ENCODE measurements at regions of chr19 and their contacts with region 1.

Region 1: GRCh38 chr19:45469132-45469944 is 1.5 kb downstream of the FOSB start:
- DNase-seq: peak; percentile 78 to 94
- ATAC-seq: peak; percentile 58 to 63
- H3K4me3 ChIP-seq: peak overlapping the region; percentile 58
- H3K27ac ChIP-seq: peak overlapping the region; percentile 55 to 86
- H3K4me1 ChIP-seq: peaks cover 24% of the 10 kb centered on the region
- CTCF ChIP-seq: no peak
- EP300 ChIP-seq: no peak
- POLR2A ChIP-seq: peak; percentile 28; the same call in 1 of the 2 replicates
- RAD21 ChIP-seq: no peak

Region 2: GRCh38 chr19:45439569-45440254 is 29.6 kb before region 1 on chr19:
- CTCF ChIA-PET with region 1: interaction called, 1,883 read pairs
- POLR2A ChIA-PET with region 1: interaction called, 40 read pairs
- DNase-seq: peak; percentile 74 to 83
- ATAC-seq: peak; percentile 26 to 55
- H3K4me3 ChIP-seq: peak overlapping the region; percentile 52
- H3K27ac ChIP-seq: peak overlapping the region; percentile 80 to 95
- H3K4me1 ChIP-seq: peaks cover 27% of the 10 kb centered on the region
- CTCF ChIP-seq: peak; percentile 100
- EP300 ChIP-seq: no peak
- POLR2A ChIP-seq: peak; percentile 12; the same call in 1 of the 2 replicates
- RAD21 ChIP-seq: peak; percentile 77 to 99

Region 3: DNA sequence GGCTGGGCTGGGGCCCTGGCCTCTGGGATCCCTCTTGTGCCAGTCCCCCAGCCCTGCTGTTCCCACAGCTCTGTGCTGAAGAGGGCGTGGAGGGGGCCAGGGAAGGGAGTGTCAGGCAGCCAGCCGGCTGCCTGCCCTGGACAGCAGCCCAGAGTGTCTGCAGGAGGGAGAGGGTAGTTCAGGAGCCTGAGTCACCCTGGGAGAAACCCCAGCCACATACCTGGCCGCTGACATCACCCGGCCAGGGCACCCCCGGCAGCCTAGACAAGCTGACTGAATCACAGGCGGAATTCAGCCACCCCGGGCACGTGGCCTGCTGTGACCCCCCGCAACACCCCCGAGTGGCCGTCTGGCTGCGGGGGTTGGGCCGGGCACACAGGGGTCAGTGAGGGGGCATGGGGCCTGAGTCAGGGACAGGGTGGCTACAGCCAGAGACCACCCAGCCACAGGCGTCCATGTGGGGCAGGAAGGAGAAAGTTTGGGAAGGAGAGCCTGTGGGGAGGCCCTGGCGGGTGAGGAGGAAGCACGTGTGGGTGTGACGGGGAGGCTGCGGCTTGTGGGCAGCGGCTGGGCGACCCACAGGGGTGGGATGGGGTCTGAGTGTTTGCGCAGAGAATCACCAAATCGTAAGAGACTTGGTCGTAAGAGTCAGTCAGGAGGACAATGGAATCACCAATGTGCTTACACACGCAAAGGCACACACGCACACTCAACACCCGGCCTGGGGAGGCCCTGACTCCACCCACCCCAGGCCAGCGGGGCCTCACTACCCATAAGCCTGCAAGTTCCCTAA is 13.4 kb before region 1 on chr19:
- CTCF ChIA-PET with region 1: interaction called, 94 read pairs
- POLR2A ChIA-PET with region 1: interaction called, 33 read pairs
- DNase-seq: peak; percentile 98 to 99
- ATAC-seq: peak; percentile 86 to 91
- H3K4me3 ChIP-seq: peak overlapping the region; percentile 28
- H3K27ac ChIP-seq: peak overlapping the region; percentile 84 to 89
- H3K4me1 ChIP-seq: peaks cover 45% of the 10 kb centered on the region
- CTCF ChIP-seq: no peak
- EP300 ChIP-seq: peak; percentile 77 to 92; a peak in 4 of 5 replicates
- POLR2A ChIP-seq: no peak
- RAD21 ChIP-seq: peak; percentile 6 to 27; a peak in 1 of 5 replicates

Region 4: GRCh38 chr19:45496349-45496953 is 27.1 kb after region 1 on chr19:
- CTCF ChIA-PET with region 1: interaction called, 107 read pairs
- POLR2A ChIA-PET with region 1: interaction called, 3 read pairs
- DNase-seq: no peak
- ATAC-seq: peak; percentile 22 to 46
- H3K4me3 ChIP-seq: peak overlapping the region; percentile 75
- H3K27ac ChIP-seq: peak overlapping the region; percentile 61 to 83; a peak in 5 of 6 replicates
- H3K4me1 ChIP-seq: peaks cover 20% of the 10 kb centered on the region
- CTCF ChIP-seq: no peak
- EP300 ChIP-seq: no peak
- POLR2A ChIP-seq: no peak
- RAD21 ChIP-seq: no peak

Measured in A549 (cell line).